WTC11 (cell line): ENCODE measurements at regions of chr19 and their contacts with region 1.

Region 1: DNA sequence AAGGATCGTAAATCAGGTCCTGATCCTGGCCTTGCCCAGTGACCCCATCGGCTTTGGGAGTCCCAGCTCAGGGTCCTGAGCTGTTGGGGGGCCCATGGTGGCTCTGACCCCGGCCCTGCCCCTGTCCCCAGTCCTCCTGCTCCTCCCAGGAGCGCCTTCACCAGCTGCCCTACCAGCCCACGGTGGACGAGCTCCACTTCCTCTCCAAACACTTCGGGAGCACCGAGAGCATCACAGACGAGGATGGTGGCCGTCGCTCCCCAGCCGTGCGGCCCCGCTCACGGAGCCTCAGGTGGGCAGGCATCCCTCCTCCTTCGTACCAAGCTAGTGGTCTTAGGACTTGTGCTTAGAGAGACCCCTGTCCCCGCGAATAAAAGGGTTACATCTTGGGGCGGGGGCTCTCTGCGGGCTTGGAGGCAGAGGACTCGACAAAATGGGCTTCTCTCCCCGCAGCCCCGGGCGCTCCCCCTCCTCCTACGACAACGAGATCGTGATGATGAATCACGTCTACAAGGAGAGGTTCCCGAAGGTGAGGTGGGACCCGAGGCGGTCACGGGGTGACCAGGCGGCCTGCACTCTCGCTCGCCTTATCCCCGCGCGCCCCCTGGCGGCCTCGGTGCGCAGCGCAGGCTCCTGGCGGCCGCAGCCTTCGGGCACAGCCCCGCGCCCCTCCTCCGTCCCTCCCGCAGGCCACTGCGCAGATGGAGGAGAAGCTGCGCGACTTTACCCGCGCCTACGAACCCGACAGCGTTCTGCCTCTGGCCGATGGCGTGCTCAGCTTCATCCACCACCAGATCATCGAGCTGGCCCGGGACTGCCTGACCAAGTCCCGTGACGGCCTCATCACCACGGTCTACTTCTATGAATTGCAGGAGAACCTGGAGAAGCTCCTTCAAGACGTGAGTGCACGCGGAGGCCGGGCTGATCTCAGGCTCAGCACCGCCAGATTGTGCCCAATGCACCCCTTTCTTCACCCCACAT is 9.1 kb downstream of the MAST1 start:
- DNase-seq: peak; percentile 98
- ATAC-seq: peak; percentile 98
- H3K4me3 Mint-ChIP-seq: peak overlapping the region; percentile 58
- H3K27ac Mint-ChIP-seq: 0 out of 2 replicates have a peak overlapping the region, but pooled peaks have one; percentile 45
- H3K4me1 Mint-ChIP-seq: peaks cover 7% of the 10 kb centered on the region
- H3K27me3 Mint-ChIP-seq: peaks cover 21% of the 10 kb centered on the region
- CTCF ChIP-seq: peak; percentile 99

Region 2: GRCh38 chr19:12766051-12766521 is 81.4 kb before region 1 on chr19:
- CTCF ChIA-PET with region 1: interaction called, 65 read pairs
- POLR2A ChIA-PET with region 1: no interaction called
- DNase-seq: peak; percentile 89
- ATAC-seq: peak; percentile 73
- H3K4me3 Mint-ChIP-seq: peak overlapping the region; percentile 60
- H3K27ac Mint-ChIP-seq: peak overlapping the region; percentile 67; the same call in 1 of the 2 replicates
- H3K4me1 Mint-ChIP-seq: peaks cover 13% of the 10 kb centered on the region
- H3K27me3 Mint-ChIP-seq: no peaks in the 10 kb centered on the region; the same call in 1 of the 2 replicates
- CTCF ChIP-seq: peak; percentile 61

Region 3: GRCh38 chr19:12796146-12797071 is 51.0 kb before region 1 on chr19:
- CTCF ChIA-PET with region 1: interaction called, 44 read pairs
- POLR2A ChIA-PET with region 1: no interaction called
- DNase-seq: peak; percentile 86
- ATAC-seq: peak; percentile 67
- H3K4me3 Mint-ChIP-seq: peak overlapping the region; percentile 43; the same call in 1 of the 2 replicates
- H3K27ac Mint-ChIP-seq: peak overlapping the region; percentile 96
- H3K4me1 Mint-ChIP-seq: peaks cover 26% of the 10 kb centered on the region
- H3K27me3 Mint-ChIP-seq: peaks cover 25% of the 10 kb centered on the region
- CTCF ChIP-seq: peak; percentile 84

Region 4: GRCh38 chr19:12825254-12826131 is 22.0 kb before region 1 on chr19:
- CTCF ChIA-PET with region 1: interaction called, 103 read pairs
- POLR2A ChIA-PET with region 1: no interaction called
- DNase-seq: peak; percentile 94
- ATAC-seq: peak; percentile 85
- H3K4me3 Mint-ChIP-seq: peak overlapping the region; percentile 77
- H3K27ac Mint-ChIP-seq: peak overlapping the region; percentile 89
- H3K4me1 Mint-ChIP-seq: peaks cover 21% of the 10 kb centered on the region
- H3K27me3 Mint-ChIP-seq: peaks cover 31% of the 10 kb centered on the region
- CTCF ChIP-seq: peak; percentile 60

Region 5: DNA sequence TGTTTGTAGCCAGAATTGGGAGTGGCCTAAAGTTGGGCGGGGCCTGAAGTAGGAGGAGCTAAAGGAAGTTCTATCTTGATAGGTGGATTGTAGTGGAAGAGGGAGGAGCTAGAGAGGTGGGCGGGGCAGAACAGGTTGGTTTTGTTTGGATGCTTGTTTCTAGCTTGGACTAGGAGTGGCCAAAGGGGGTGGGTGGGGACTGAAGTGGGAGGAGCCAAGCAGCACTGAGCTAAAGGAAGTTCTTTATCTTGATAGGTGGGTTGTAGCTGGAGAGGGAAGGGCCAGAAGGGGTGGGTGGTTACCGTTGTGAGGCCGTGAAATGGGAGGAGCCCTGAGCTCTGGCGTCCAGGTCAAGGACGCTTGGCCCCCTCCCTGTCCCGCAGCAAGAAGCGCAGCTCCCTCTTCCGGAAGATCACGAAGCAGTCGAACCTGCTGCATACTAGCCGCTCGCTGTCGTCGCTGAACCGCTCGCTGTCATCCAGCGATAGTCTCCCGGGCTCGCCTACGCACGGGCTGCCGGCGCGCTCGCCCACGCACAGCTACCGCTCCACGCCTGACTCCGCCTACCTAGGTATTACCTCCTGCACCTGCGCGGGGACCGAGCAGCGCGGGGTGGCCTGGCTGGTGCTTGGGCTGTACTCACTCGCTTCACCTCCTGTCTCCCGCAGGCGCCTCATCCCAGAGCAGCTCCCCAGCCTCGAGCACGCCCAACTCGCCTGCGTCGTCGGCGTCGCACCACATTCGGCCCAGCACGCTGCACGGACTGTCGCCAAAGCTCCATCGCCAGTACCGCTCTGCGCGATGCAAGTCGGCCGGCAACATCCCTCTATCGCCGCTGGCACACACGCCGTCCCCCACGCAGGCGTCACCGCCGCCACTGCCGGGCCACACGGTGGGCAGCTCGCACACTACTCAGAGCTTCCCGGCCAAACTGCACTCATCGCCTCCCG is 25.8 kb after region 1 on chr19:
- CTCF ChIA-PET with region 1: interaction called, 42 read pairs
- POLR2A ChIA-PET with region 1: no interaction called
- DNase-seq: peak; percentile 89
- ATAC-seq: peak; percentile 86
- H3K4me3 Mint-ChIP-seq: peak overlapping the region; percentile 67
- H3K27ac Mint-ChIP-seq: no peak overlapping the region
- H3K4me1 Mint-ChIP-seq: no peaks in the 10 kb centered on the region; the same call in 1 of the 2 replicates
- H3K27me3 Mint-ChIP-seq: peaks cover 30% of the 10 kb centered on the region
- CTCF ChIP-seq: no peak